Sigmoid colon (tissue), 7 donors: ENCODE measurements at regions of chr6 and their contacts with region 1.

Region 1: GRCh38 chr6:35342258-35343091 is at the start of gene PPARD:
- DNase-seq: peak; percentile 99
- H3K4me3 ChIP-seq: peak within 1 kb of the TSS; percentile 65 to 99 (median 72)
- H3K27ac ChIP-seq: peak within 1 kb of the TSS; percentile 86 to 95 (median 90)
- H3K4me1 ChIP-seq: peaks cover 0 to 37% (median 23%) of the 10 kb centered on the region in 4 donors
- H3K27me3 ChIP-seq: no peaks in the 10 kb centered on the region
- CTCF ChIP-seq: peak; percentile 94 to 100 (median 98)
- EP300 ChIP-seq: no peak
- POLR2A ChIP-seq: peak; percentile 67 to 80
- total RNA-seq, gene PPARD: 5.8 to 16.8 (median 8.5) TPM

Region 2: DNA sequence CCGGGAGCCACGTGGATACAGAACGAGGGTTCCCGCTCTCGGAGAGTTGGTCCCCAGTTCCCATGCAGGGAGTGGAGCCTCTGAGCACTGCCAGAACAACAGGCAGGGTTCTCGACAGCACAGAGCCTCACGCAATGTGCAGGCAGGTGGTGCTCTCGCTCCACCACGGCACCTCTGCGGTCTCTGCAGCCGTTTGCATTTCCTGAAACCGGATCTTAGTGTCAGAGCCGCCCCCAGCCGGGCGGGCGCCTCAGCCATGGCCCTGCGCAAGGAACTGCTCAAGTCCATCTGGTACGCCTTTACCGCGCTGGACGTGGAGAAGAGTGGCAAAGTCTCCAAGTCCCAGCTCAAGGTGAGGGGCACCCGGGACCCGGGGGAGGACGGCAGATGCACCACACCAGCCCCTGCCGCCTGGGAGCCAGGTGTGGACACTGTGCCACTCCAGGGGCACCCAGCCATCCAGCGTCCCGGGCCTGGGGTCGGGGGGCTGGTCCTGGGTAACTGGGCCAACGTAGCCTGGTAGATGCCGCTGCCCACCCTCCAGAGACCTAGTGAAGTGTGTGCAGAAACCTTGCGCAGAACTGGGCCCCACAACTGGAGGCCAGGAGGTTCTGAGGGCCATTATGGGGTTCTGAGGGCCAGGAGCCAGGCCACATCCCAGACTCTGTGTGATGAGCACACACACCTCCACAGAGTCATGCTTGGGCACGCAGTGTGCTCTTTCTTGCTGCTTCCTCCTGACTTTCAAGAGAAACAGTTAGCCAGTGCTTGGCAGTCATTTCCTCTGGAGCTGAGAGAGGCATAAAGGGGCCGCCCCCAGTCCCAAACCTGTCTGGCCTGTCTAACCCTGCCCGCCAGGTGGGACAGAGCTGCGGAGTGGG is 44.6 kb before region 1 on chr6 and contains the start of gene DEF6:
- intact Hi-C with region 1: loop called (anchors 5 kb)
- DNase-seq: peak; percentile 90
- H3K4me3 ChIP-seq: peak within 1 kb of the TSS in 3 of 4 donors; percentile 24 to 42 (median 41)
- H3K27ac ChIP-seq: peak within 1 kb of the TSS; percentile 39 to 54 (median 48)
- H3K4me1 ChIP-seq: peaks cover 0 to 14% (median 13%) of the 10 kb centered on the region in 4 donors
- H3K27me3 ChIP-seq: no peaks in the 10 kb centered on the region
- CTCF ChIP-seq: peak; percentile 29 to 49 (median 40)
- EP300 ChIP-seq: no peak
- POLR2A ChIP-seq: no peak
- total RNA-seq, gene DEF6: 1.4 to 4.7 (median 3.5) TPM

Region 3: DNA sequence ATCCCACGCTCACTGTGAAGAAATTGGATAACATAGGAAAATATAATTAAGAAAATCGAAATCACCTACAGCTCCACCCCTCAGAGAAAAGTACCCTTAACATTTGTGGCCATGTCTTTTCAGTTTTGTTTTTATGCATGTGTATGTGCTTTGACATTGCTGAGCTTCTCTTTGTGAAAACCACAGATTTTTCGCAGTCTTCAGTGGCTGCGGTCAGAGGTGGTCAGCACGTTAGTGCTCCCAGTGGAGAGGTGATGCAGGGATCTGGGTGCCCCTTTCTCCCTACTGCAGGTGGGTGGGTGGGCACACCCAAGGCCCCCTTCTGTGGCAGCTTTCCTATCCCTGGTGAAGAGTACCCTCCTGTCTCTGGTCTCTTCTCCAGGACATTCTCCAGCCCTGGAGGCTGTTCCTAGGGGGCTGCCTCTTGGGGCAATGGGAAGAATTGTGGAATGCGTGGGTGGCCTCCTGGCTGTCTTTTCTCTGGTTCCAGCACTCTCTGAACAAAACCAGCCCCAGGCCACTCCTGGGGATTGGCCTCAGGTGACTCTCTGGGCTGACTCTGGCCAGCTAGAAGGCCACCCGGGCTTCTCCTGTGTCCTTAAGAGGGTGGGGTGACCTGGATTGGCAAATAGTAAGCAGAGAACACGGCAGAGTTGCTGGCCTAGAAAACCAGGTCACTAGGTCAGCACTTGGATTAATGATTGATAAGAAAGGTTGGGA is 59.8 kb after region 1 on chr6:
- intact Hi-C with region 1: no loop called
- DNase-seq: no peak
- H3K4me3 ChIP-seq: no peak overlapping the region
- H3K27ac ChIP-seq: no peak overlapping the region
- H3K4me1 ChIP-seq: no peaks in the 10 kb centered on the region
- H3K27me3 ChIP-seq: no peaks in the 10 kb centered on the region
- CTCF ChIP-seq: no peak
- EP300 ChIP-seq: no peak
- POLR2A ChIP-seq: no peak

Region 4: GRCh38 chr6:35415065-35415991 is 72.9 kb after region 1 on chr6:
- intact Hi-C with region 1: loop called (anchors 1 kb)
- DNase-seq: peak; percentile 92
- H3K4me3 ChIP-seq: no peak overlapping the region
- H3K27ac ChIP-seq: peak overlapping the region in 3 of 4 donors; percentile 4 to 58 (median 53)
- H3K4me1 ChIP-seq: peaks cover 0 to 14% (median 11%) of the 10 kb centered on the region in 4 donors
- H3K27me3 ChIP-seq: no peaks in the 10 kb centered on the region
- CTCF ChIP-seq: peak; percentile 58 to 77 (median 62)
- EP300 ChIP-seq: no peak
- POLR2A ChIP-seq: no peak

Region 5: DNA sequence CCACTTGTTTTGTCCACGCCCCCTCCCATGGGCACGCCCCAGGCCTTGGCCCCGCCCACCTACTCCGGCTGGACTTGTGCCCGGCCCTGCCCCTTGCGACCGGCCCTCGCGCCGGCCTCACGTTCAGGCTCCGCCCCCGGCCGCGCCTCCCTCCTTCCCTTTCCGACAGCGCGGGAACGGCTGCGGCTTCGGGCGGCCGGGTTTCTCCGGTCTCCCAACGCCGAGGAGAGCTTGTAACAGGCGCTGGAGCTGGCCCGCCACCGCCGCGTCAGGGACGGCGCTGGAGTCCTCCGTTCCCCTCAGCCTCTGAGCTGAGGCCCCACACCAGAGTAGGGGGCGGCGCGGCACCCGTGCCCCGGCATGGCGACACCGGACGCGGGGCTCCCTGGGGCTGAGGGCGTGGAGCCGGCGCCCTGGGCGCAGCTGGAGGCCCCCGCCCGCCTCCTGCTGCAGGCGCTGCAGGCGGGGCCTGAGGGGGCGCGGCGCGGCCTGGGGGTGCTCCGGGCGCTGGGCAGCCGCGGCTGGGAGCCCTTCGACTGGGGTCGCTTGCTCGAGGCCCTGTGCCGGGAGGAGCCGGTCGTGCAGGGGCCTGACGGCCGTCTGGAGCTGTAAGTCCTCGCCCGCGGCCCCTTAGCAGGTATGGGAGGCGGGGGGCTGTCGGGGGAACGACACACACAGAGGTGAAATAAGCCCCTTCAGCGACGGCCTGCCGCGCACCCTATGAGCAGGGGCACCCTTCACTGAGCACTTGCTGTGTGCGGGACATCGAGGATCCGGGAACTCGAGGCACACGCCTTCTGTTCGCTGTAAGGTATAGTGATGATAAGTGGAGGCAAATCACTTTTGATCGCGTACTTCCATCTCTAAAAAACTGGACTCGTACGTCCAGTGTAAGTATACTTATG is 110.0 kb after region 1 on chr6 and contains the start of gene FANCE:
- intact Hi-C with region 1: loop called (anchors 1 kb)
- DNase-seq: peak; percentile 97
- H3K4me3 ChIP-seq: peak within 1 kb of the TSS; percentile 43 to 69 (median 64)
- H3K27ac ChIP-seq: peak within 1 kb of the TSS; percentile 74 to 77 (median 76)
- H3K4me1 ChIP-seq: peaks cover 0 to 23% (median 18%) of the 10 kb centered on the region in 4 donors
- H3K27me3 ChIP-seq: no peaks in the 10 kb centered on the region
- CTCF ChIP-seq: no peak
- EP300 ChIP-seq: no peak
- POLR2A ChIP-seq: peak in 1 of 2 donors; percentile 21
- total RNA-seq, gene FANCE: 3.3 to 3.9 (median 3.7) TPM

Region 6: DNA sequence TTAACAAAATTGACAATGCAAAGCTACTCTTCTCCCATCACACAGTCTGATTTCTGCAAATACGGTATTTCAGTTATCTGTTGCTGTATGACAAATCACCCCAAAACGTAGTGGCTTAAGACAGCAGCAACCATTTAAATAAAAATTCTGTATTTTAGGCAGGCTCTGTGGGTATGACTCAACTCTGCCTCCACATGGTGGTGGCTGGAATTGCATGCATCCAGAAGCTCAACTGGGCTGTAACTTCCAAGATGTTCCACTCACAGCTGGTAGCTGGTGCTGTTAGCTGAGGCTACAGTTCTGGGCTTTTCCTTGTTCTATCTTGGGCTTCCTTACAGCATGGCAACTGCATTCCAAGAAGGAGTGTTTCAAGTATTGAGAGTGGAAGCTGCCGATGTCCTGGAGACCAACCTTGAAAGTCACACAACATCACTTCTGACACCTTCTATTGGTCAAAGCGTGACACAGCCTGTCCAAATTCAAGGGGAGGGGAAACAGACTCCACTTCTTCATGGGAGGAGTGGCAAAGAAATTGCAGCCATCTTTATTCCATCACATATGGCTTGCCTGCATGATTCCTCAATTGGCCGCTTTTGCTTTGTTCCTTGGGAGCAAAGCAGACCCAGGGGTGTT is 209.9 kb after region 1 on chr6:
- intact Hi-C with region 1: no loop called
- DNase-seq: no peak
- H3K4me3 ChIP-seq: no peak overlapping the region
- H3K27ac ChIP-seq: no peak overlapping the region
- H3K4me1 ChIP-seq: no peaks in the 10 kb centered on the region
- H3K27me3 ChIP-seq: peaks cover 0 to 7% (median 0%) of the 10 kb centered on the region in 3 donors
- CTCF ChIP-seq: peak; percentile 6 to 46 (median 32)
- EP300 ChIP-seq: no peak
- POLR2A ChIP-seq: no peak